Ovary (tissue), 10 donors: ENCODE measurements at regions of chr6 and their contacts with region 1.

Region 1: DNA sequence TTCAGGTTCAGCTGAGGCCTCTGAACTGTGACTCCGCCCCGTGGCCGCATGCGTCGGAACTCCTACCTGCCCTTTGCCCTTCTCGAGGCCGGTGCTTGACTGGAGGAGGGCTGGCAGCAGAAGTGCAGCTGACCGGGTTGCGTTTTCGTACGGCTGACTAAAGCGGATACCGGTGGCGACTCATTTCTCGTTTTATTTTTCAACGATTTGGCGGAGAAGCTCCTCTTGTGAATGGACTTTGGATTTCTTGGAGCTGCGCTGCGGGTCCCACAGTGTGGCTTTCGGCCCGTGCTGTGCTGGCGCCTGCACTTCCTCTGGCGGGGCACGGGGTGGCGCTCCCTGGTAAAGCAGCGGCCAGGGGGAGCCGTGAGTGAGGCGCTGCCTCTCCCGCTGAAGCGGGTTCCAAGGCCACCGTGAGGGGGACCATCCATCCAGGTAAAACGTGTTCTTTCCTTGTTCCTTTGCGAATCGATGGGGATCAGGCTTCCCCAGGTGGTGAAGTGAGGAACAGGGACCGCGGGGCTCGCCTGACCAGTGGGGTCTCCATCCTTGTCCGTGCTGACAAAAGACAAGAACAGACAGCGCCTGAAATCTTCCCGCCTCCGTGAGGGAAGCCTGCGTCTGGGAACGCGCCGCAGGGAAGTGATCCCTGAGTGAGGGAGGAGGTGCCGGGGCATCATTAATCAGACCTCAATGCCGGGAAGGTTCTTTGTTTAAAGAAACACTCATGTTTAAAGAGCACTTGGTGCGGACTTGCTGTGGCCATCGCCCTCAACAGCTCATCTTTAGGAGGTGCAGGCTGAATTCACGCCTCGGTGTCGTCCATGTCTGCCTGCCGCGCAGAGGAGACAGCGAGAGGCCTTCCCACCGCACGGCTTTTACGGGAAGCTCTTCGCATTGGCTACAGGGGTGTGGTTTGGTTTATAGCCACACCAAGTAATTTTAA is 38.8 kb downstream of the ERMARD start:
- DNase-seq: peak; percentile 76 to 85 (median 81)
- H3K4me3 ChIP-seq: peak overlapping the region; percentile 49
- H3K27ac ChIP-seq: peak overlapping the region; percentile 80 to 90
- H3K4me1 ChIP-seq: no peaks in the 10 kb centered on the region
- H3K27me3 ChIP-seq: no peaks in the 10 kb centered on the region
- CTCF ChIP-seq: peak; percentile 94 to 97 (median 96)
- EP300 ChIP-seq: no peak
- POLR2A ChIP-seq: peak; percentile 21

Region 2: DNA sequence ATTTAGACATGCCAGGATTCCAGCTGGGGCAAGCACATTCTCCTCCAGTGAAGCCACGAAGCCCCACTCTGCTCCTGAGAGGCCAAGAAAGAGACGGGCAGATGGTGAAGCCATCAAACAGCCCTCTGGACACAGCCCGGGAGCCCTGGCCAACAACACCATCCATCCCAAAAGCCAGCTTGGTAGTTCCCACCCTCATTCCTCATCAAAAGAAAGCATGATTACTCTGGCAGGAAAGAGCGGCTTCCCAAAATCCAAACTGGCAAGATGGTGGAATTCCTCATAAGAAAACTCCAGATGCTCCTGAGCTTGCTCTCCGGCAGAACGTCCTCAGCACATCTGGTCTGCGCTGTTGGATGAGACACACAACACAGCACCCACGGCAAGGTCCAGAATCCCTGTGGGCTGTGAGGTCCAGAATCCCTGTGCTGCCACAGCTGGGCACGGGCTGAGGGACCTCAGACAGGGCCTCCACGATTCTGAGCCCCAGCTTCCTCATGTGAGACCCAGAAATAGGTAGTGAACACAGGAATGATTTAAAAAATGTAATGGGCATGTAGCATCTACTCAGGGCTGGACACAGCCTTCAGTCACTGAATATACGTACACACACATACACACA is 589.3 kb before region 1 on chr6:
- intact Hi-C with region 1: no loop called
- DNase-seq: no peak
- H3K4me3 ChIP-seq: no peak overlapping the region
- H3K27ac ChIP-seq: no peak overlapping the region
- H3K4me1 ChIP-seq: peaks cover 8% of the 10 kb centered on the region
- H3K27me3 ChIP-seq: no peaks in the 10 kb centered on the region
- CTCF ChIP-seq: no peak
- EP300 ChIP-seq: no peak
- POLR2A ChIP-seq: no peak

Region 3: DNA sequence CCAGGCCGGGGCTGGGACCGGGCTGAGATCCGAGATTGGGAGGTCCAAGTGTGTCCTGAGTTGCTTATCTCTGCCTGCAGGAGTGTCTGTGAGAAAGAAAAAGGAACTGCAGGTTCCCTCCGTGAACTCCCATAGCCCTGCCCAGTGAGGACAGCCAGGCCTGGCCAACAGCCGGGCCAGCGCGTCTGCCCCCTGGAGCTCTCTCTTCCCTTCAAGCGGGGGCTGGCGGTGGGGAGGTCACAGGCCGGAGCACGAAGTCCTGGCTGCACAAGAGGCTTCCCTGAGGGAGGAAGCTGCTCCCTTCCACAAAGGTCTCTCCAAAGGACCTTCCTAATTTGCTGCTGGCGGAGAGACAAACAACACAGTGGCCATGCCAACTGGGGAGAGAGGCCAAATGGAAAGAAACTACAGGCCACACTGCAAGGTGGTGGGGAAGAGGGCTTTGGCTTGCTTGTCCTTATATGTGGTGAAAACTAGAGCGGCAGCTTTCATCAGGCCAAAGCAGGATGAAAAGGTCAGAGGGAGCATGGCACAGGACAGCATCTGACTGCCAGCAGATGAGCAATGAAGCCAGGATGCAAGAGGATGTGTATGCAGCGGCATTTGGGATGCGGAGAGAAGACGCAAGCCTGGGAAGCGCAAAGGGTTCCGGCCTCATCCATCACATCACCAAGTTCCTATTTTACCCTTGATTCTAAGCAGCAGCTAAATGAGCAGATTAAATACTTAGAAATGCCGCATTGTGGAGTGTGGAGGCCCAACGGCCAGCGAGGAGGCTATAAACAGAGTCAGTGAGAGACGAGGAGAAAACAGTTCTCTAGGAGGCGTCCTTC is 221.2 kb after region 1 on chr6:
- intact Hi-C with region 1: no loop called
- DNase-seq: peak in 3 of 5 donors; percentile 50 to 83 (median 57)
- H3K4me3 ChIP-seq: no peak overlapping the region
- H3K27ac ChIP-seq: no peak overlapping the region
- H3K4me1 ChIP-seq: peaks cover 2% of the 10 kb centered on the region
- H3K27me3 ChIP-seq: no peaks in the 10 kb centered on the region
- CTCF ChIP-seq: no peak
- EP300 ChIP-seq: no peak
- POLR2A ChIP-seq: no peak

Region 4: GRCh38 chr6:170295510-170296422 is 505.5 kb after region 1 on chr6:
- intact Hi-C with region 1: loop called in 1 of 4 experiments (anchors 5 kb)
- DNase-seq: peak in 1 of 5 donors; percentile 16
- H3K4me3 ChIP-seq: peak overlapping the region; percentile 21
- H3K27ac ChIP-seq: no peak overlapping the region
- H3K4me1 ChIP-seq: peaks cover 21% of the 10 kb centered on the region
- H3K27me3 ChIP-seq: peaks cover 3% of the 10 kb centered on the region
- CTCF ChIP-seq: no peak
- EP300 ChIP-seq: no peak
- POLR2A ChIP-seq: no peak

Region 5: DNA sequence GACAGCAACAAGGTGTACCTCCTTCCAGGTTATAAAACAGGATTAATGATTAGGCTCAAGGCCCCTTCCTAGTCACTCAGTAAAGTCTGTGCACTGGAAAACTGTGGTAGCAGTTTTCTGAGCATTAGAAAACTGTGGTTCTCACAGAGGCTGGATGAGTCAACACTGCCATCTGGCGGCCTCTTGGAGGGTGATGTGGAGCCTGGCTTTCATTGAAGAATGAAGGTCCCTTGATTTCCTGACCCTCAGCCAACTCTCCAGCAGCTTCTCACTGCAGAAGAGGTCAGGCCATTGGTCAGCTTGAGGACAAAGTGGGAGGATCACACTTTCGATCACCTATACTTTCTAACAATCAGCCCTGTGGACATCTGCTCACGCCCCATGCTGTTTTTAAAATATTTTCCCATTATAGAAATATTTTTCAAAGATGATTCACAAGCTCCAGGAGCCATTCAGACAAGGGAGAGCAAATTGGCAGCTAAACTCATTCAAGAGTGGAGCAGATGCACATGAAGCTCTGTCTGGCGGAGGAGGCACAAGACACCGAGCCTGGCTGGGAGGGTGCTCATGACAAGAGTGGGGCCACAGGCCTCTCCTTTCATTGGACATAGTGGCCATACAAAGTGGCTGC is 739.7 kb after region 1 on chr6:
- intact Hi-C with region 1: loop called in 1 of 4 experiments (anchors 5 kb)
- DNase-seq: peak; percentile 69 to 86 (median 80)
- H3K4me3 ChIP-seq: no peak overlapping the region
- H3K27ac ChIP-seq: no peak overlapping the region
- H3K4me1 ChIP-seq: no peaks in the 10 kb centered on the region
- H3K27me3 ChIP-seq: no peaks in the 10 kb centered on the region
- CTCF ChIP-seq: peak; percentile 71 to 93 (median 78)
- EP300 ChIP-seq: no peak
- POLR2A ChIP-seq: no peak